ENCODE measurements at regions of chr1 and their contacts with region 1.

Region 1: DNA sequence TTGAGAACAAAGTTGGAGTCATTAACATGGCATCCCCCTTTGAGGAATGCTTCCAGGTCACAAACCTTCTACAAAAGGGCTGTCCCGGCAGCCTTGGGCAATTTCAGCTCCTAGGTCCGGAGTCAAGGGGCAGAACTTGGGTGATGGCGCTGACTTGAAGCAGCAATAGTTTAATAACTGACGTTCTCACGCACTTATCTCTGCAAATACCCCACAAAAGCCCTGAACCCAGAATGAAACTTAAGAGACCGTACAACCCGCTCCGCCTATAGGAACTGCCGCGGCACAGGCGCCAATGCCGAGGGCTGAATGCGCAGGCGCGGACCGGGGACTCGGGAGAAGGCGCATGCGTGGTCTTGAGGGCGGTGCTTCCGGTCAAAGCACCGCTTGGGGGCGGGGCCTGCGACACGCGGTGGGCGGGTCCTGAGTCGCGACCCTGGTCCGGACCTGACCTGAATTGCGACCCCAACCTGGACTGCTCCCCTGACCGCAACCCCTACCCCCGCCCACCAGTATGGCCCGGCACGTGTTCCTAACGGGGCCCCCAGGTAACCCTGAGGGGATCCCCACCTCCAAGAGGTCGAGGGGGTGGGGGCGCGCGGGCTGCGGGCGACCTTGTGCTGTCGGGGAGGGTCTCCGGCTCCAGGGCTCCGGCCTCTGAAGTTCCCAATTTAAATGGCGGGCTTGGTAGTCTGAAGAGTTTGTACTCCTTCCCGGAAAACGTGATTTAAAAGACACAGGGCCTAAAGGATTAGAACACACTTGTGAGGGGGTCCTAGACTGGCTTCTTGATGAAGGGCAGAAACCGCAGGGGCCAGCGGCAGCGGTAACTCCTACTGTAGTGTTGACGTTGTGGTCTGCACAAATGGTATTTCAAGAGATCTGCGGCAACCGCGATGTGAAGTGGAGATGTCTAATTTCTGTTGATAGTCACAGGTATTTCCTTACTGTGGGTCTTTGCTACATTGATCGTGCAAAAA is at the start of gene NTPCR:
- DNase-seq: peak; percentile 99
- H3K4me3 Mint-ChIP-seq: peak within 1 kb of the TSS; percentile 94
- H3K27ac Mint-ChIP-seq: peak within 1 kb of the TSS; percentile 93
- H3K4me1 Mint-ChIP-seq: peaks cover 32% of the 10 kb centered on the region
- H3K27me3 Mint-ChIP-seq: no peaks in the 10 kb centered on the region
- total RNA-seq, gene NTPCR: 30.0 and 30.5 TPM in 2 replicates

Region 2: GRCh38 chr1:232630047-232630893 is 320.2 kb before region 1 on chr1 and contains the start of gene SIPA1L2:
- intact Hi-C with region 1: loop called (anchors 2 kb)
- DNase-seq: peak; percentile 97
- H3K4me3 Mint-ChIP-seq: peak within 1 kb of the TSS; percentile 87
- H3K27ac Mint-ChIP-seq: peak within 1 kb of the TSS; percentile 76
- H3K4me1 Mint-ChIP-seq: peaks cover 22% of the 10 kb centered on the region
- H3K27me3 Mint-ChIP-seq: peaks cover 58% of the 10 kb centered on the region
- total RNA-seq, gene SIPA1L2: 3.1 and 4.1 TPM in 2 replicates

Region 3: DNA sequence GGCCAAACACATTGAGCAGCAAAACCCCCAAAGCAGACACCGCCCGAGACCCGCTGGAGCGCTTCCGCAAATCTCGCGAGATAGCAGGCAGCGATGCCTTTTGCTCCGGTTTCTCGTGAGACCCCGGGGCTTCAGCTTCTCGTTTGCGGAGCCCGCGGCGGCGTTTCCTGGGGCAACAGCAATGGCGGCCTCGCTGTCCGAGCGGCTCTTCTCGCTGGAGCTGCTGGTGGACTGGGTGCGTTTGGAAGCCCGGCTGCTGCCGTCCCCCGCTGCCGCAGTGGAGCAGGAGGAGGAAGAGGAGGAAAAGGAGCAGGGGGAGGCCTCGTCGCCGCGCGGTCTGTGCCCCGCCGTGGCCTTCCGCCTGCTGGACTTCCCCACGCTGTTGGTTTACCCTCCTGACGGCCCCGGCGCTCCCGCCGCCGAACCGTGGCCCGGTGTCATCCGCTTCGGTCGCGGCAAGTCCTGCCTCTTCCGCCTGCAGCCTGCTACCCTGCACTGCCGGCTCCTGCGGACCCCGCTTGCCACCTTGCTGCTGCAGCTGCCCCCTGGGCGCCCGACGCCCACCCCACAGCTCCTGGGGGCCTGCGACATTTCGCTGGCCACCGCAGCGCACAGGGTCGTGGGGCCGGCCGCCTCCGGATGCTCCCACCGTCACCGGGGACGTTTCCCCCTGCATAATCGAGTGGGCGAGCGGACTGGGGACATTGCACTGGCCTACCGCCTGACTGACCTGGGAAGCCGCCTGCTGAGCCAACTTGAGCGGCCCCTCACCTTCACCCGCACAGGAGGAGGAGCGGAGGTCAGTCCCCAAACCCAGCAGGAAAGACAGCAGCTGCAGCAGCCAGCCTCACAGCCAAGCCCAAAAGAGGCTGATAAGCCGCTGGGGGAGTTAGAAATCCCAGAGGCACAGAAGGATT is 145.0 kb before region 1 on chr1 and contains the start of gene MAP10:
- intact Hi-C with region 1: loop called (anchors 2 kb)
- DNase-seq: peak; percentile 94
- H3K4me3 Mint-ChIP-seq: peak within 1 kb of the TSS; percentile 91
- H3K27ac Mint-ChIP-seq: peak within 1 kb of the TSS; percentile 86
- H3K4me1 Mint-ChIP-seq: peaks cover 27% of the 10 kb centered on the region
- H3K27me3 Mint-ChIP-seq: peaks cover 10% of the 10 kb centered on the region
- total RNA-seq, gene MAP10: 2.6 and 2.7 TPM in 2 replicates

Region 4: DNA sequence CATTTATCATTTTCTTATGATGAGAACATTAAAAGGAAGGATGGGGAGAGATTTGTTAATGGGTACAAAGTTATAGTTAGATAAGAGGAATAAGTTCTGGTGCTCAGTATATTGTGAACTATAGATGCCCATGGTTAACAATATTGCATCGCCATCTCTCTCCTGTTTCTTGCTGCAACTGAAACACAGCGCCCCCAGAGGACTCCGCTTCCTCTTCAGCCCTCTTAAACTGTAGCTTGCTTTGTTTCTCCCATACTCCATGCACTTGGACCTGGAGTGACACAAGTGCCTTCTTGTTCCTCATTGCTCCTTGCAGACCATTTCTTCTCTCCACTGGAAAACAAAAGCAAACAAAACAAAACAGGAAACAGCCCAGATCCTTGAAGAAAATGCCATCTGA is 70.1 kb before region 1 on chr1:
- intact Hi-C with region 1: no loop called
- DNase-seq: no peak
- H3K4me3 Mint-ChIP-seq: no peak overlapping the region
- H3K27ac Mint-ChIP-seq: no peak overlapping the region
- H3K4me1 Mint-ChIP-seq: peaks cover 11% of the 10 kb centered on the region
- H3K27me3 Mint-ChIP-seq: no peaks in the 10 kb centered on the region

Region 5: GRCh38 chr1:232891071-232891470 is 59.4 kb before region 1 on chr1:
- intact Hi-C with region 1: loop called (anchors 5 kb)
- DNase-seq: no peak
- H3K4me3 Mint-ChIP-seq: no peak overlapping the region
- H3K27ac Mint-ChIP-seq: no peak overlapping the region
- H3K4me1 Mint-ChIP-seq: peaks cover 8% of the 10 kb centered on the region
- H3K27me3 Mint-ChIP-seq: peaks cover 8% of the 10 kb centered on the region

Region 6: GRCh38 chr1:232904566-232904965 is 45.9 kb before region 1 on chr1:
- intact Hi-C with region 1: no loop called
- DNase-seq: peak; percentile 73
- H3K4me3 Mint-ChIP-seq: no peak overlapping the region
- H3K27ac Mint-ChIP-seq: peak overlapping the region; percentile 57
- H3K4me1 Mint-ChIP-seq: peaks cover 46% of the 10 kb centered on the region
- H3K27me3 Mint-ChIP-seq: no peaks in the 10 kb centered on the region

Region 7: DNA sequence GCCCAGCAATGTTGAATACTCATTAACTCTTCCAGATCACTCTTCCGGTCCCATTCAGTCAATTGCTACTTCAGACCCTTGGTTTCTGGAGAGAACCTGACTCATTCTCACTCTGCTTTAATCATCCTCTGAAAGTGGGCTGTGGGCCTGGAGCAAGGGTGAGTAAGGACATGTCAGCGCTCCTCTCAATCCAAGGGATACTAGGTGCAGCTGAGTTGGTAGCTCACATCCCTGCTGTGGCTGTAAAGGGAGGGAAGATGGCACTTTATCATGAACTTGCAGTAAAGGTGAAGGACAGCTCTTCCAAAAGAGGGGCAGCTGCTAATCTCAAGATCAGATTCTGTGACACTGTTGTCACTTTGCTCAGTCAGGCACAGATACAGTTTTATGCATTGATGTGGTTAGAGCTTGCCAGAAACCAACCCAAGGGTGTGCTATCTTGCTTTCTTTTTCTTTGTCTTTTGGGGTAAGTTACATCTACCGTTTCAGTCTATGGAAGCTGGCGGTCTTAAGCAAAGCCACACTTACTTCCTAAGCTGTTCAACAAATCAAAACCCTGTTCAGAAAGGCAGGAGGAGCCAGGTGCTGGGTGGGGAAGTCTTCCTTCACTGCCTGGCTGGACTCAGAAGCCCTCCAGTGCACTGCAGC is 26.6 kb before region 1 on chr1:
- intact Hi-C with region 1: loop called (anchors 1 kb)
- DNase-seq: peak; percentile 90
- H3K4me3 Mint-ChIP-seq: peak overlapping the region; percentile 66
- H3K27ac Mint-ChIP-seq: peak overlapping the region; percentile 92
- H3K4me1 Mint-ChIP-seq: peaks cover 28% of the 10 kb centered on the region
- H3K27me3 Mint-ChIP-seq: no peaks in the 10 kb centered on the region

Region 8: DNA sequence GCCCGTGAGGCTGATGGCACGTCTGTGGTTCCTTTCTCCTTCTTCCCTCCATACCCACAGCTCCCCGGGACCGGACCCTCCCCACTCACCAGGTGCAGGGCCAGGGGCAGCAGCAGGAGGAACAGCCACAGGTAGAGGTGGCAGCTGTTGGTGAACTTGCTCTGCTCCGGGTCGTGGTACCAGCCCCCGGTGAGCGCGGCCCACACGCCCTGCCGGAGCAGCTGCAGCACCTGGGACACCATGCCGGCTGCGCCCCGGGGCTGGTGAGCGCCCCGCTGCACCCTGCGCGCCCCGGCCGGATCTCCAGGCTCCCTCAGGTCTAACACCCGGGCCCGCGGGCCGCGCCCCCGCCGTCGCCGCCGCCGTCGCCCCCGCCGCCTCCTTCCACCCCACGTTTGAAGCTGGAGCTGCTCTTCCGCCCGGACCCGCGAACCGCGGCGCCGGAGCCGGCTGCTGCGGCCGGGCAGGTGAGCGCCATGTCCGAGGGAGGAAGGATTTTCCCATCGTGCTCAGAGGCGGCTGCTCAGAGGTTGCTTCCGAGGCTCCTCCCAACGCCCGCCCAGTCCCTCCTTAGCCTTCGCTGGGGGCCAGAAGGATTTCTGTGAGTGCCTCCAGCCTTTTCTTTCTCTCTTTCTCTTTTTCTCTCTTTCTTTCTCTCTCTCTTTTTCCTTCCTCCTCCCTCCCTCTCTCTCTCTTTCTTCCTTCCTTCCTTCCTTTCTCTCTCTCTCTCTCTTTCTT is 344.9 kb after region 1 on chr1 and contains the start of gene PCNX2:
- intact Hi-C with region 1: loop called (anchors 1 kb)
- DNase-seq: peak; percentile 89
- H3K4me3 Mint-ChIP-seq: peak within 1 kb of the TSS; percentile 97
- H3K27ac Mint-ChIP-seq: peak within 1 kb of the TSS; percentile 90
- H3K4me1 Mint-ChIP-seq: peaks cover 31% of the 10 kb centered on the region
- H3K27me3 Mint-ChIP-seq: peaks cover under 1% of the 10 kb centered on the region
- total RNA-seq, gene PCNX2: 25.0 and 29.5 TPM in 2 replicates

Region 9: DNA sequence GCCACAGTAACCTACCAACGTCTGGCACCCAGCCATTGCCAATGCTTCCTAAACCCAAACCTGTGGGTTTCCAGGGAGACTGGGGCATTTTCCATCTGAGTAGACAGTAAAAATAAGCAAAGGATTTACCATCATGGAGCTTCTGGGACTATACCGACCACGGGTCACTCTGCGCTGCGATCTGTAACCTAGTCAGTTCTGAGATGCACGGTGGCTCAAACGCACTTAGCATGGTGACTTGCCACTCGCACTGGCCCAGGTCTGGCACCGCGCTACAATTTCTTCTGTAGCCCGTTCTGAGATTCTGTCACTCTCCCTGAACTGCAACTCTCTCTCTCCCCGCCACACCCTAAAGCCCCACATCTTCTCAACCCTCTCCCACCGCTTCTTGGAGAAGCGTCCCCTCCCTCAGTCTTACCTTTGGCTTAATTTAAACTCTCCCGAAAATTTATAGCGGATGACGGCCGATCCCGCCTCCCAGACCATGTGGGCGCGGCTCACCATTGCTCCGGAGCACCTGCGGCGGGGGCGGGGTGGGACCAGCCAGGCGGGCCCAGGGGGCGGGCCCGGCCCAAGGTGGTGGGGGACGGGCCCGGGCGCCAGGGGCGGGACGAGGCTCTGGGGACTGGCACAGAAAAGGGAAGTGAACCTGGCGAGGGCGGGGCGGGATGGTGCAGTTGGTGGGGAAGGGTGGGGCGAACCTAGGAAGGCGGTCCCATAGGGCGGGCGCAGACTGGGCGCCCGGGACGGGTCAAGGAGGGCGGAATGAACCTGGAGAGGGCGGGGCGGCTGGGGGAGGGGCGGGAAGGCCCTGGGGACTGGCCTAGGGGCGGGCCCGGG is 376.5 kb after region 1 on chr1:
- intact Hi-C with region 1: loop called (anchors 5 kb)
- DNase-seq: peak; percentile 93
- H3K4me3 Mint-ChIP-seq: peak overlapping the region; percentile 84
- H3K27ac Mint-ChIP-seq: no peak overlapping the region
- H3K4me1 Mint-ChIP-seq: peaks cover 7% of the 10 kb centered on the region
- H3K27me3 Mint-ChIP-seq: peaks cover 43% of the 10 kb centered on the region

Measured in activated CD4-positive, alpha-beta T cell treated with anti-CD3 and anti-CD28 coated beads, Interleukin-2, amount 10 ng/mL, durations not matched to agents 24 days and 14 days (primary cell).